Activated T-helper 1 cell treated with anti-CD3 and anti-CD28 coated beads, Interleukin-12 subunit alpha, Interleukin-12 subunit beta, Interleukin-2, Interleukin-4 antibody, amounts not matched to agents 30 ng/mL and 10 ng/mL and 1 ng/mL, durations not matched to agents 14 hours and 24 hours and 36 hours (primary cell): ENCODE measurements at regions of chr3 and their contacts with region 1.

Region 1: GRCh38 chr3:107676469-107677309 is 153.9 kb downstream of the BBX start:
- DNase-seq: no peak
- H3K4me3 Mint-ChIP-seq: no peak overlapping the region
- H3K27ac Mint-ChIP-seq: no peak overlapping the region
- H3K4me1 Mint-ChIP-seq: peaks cover 32% of the 10 kb centered on the region
- H3K27me3 Mint-ChIP-seq: no peaks in the 10 kb centered on the region

Region 2: DNA sequence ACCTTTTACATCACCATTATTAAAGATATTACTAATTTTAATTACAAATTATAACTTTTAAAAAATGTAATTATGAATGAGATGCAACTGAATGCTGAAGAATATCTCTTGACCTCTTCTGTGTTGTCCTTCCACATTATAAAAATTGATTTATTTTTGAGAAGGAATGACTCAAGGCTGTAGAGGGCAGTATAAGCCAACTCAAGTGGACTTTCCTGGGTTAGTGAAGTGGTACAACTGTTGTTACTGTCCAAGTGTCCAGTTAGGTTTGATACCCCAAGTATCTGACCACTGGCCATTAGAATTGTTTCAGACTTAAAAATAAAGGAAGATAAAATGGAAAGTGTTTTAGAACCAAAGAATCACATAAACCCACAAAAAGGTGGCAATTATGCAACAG is 102.0 kb before region 1 on chr3:
- intact Hi-C with region 1: loop called (anchors 5 kb)
- DNase-seq: no peak
- H3K4me3 Mint-ChIP-seq: no peak overlapping the region
- H3K27ac Mint-ChIP-seq: no peak overlapping the region
- H3K4me1 Mint-ChIP-seq: peaks cover 23% of the 10 kb centered on the region
- H3K27me3 Mint-ChIP-seq: no peaks in the 10 kb centered on the region

Region 3: GRCh38 chr3:107846279-107846852 is 169.7 kb after region 1 on chr3:
- intact Hi-C with region 1: loop called (anchors 10 kb)
- DNase-seq: no peak
- H3K4me3 Mint-ChIP-seq: no peak overlapping the region
- H3K27ac Mint-ChIP-seq: no peak overlapping the region
- H3K4me1 Mint-ChIP-seq: no peaks in the 10 kb centered on the region
- H3K27me3 Mint-ChIP-seq: peaks cover 5% of the 10 kb centered on the region

Region 4: DNA sequence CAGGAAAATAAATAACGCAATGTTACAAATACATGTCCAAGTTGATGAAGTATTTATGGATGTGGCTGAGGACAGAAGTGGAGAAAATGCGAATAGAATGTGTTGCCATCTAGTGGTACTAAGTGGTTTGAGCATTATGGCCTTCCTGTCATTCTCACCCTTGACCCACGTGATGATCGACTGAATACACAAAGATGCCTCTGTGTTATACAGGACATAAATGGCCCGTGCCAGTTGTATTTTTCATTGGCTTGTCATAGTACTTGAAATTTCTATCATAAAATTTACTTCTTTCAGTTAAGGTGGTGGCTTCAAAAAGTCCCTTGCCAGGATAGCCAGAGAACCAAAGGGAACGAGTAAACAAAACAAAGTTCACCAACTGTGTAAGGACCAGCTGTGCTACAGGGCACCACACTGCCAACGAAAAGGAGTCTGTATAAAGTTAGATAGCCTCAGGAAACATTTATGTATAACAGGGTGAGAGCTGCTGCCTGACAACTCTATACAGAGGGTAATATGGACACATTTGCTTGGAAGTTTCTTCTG is 730.0 kb after region 1 on chr3:
- intact Hi-C with region 1: loop called (anchors 10 kb)
- DNase-seq: peak; percentile 9
- H3K4me3 Mint-ChIP-seq: no peak overlapping the region
- H3K27ac Mint-ChIP-seq: no peak overlapping the region
- H3K4me1 Mint-ChIP-seq: peaks cover 11% of the 10 kb centered on the region
- H3K27me3 Mint-ChIP-seq: no peaks in the 10 kb centered on the region

Region 5: GRCh38 chr3:108552267-108553159 is 875.8 kb after region 1 on chr3:
- intact Hi-C with region 1: loop called (anchors 5 kb)
- DNase-seq: no peak
- H3K4me3 Mint-ChIP-seq: no peak overlapping the region
- H3K27ac Mint-ChIP-seq: no peak overlapping the region
- H3K4me1 Mint-ChIP-seq: peaks cover 6% of the 10 kb centered on the region
- H3K27me3 Mint-ChIP-seq: no peaks in the 10 kb centered on the region